PC-3 (cell line): ENCODE measurements at regions of chr19 and their contacts with region 1.

Region 1: DNA sequence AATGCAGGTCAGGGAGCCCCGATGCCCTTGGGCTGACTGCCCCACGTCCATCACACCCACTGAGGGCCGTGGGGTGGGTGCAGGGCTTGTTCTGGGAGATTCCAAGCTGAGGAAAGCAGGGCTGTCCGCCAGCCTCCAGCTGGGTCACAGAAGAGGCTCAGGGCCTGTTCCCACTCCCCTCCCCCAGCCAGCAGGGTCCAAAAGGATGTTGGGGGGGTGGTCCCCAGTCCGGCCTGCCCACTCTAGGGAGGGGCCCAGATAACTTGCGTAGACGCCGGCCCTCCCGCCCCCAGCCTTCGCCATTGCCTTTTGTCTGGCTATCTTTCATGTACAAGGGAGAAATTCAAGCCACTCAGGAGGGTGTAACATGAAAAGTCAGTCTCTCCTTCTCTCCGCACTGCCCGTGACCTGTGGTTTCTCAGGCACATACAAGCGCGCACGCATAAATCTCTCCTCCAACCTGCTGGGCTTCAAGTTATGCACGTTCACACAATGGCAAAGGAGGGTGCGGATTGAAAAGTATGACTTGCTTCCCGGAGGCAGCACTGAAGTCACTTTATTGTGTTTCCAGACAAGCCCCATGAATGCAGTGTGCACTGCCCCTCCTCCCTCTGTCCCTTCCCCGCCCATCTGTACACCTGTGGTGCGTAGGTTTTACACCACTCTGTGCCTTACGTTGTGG is 20.2 kb downstream of the CARM1 start:
- DNase-seq: no peak
- ATAC-seq: no peak
- H3K4me3 ChIP-seq: no peak overlapping the region
- H3K27ac ChIP-seq: no peak overlapping the region
- H3K4me1 ChIP-seq: peaks cover 5% of the 10 kb centered on the region
- H3K27me3 ChIP-seq: no peaks in the 10 kb centered on the region
- CTCF ChIP-seq: no peak

Region 2: GRCh38 chr19:10979951-10980381 is 88.4 kb after region 1 on chr19:
- CTCF ChIA-PET with region 1: interaction called, 11 read pairs
- POLR2A ChIA-PET with region 1: no interaction called
- intact Hi-C with region 1: no loop called
- DNase-seq: no peak
- ATAC-seq: no peak
- H3K4me3 ChIP-seq: no peak overlapping the region
- H3K27ac ChIP-seq: no peak overlapping the region
- H3K4me1 ChIP-seq: no peaks in the 10 kb centered on the region
- H3K27me3 ChIP-seq: no peaks in the 10 kb centered on the region
- CTCF ChIP-seq: no peak